B cell (primary cell): ENCODE measurements at regions of chr2 and their contacts with region 1.

Region 1: GRCh38 chr2:128321784-128322714 is 3.4 kb upstream of the HS6ST1 start:
- DNase-seq: peak; percentile 91
- ATAC-seq: peak; percentile 52
- H3K4me3 ChIP-seq: peak overlapping the region; percentile 31 to 67 (median 52)
- H3K4me3 Mint-ChIP-seq: peak overlapping the region; percentile 78
- H3K27ac ChIP-seq: no peak overlapping the region
- H3K27ac Mint-ChIP-seq: peak overlapping the region; percentile 71
- H3K4me1 ChIP-seq: peaks cover 15 to 21% of the 10 kb centered on the region in 2 donors
- H3K4me1 Mint-ChIP-seq: peaks cover 20% of the 10 kb centered on the region
- H3K27me3 ChIP-seq: peaks cover 0 to 10% (median 0%) of the 10 kb centered on the region in 4 experiments
- H3K27me3 Mint-ChIP-seq: no peaks in the 10 kb centered on the region
- CTCF ChIP-seq: peak; percentile 96

Region 2: GRCh38 chr2:128405981-128406613 is 84.0 kb after region 1 on chr2:
- CTCF ChIA-PET with region 1: no interaction called
- POLR2A ChIA-PET with region 1: no interaction called
- intact Hi-C with region 1: no loop called
- DNase-seq: no peak
- ATAC-seq: no peak
- H3K4me3 ChIP-seq: no peak overlapping the region
- H3K4me3 Mint-ChIP-seq: no peak overlapping the region
- H3K27ac ChIP-seq: no peak overlapping the region
- H3K27ac Mint-ChIP-seq: no peak overlapping the region
- H3K4me1 ChIP-seq: no peaks in the 10 kb centered on the region
- H3K4me1 Mint-ChIP-seq: no peaks in the 10 kb centered on the region
- H3K27me3 ChIP-seq: no peaks in the 10 kb centered on the region
- H3K27me3 Mint-ChIP-seq: peaks cover 10% of the 10 kb centered on the region
- CTCF ChIP-seq: no peak

Region 3: DNA sequence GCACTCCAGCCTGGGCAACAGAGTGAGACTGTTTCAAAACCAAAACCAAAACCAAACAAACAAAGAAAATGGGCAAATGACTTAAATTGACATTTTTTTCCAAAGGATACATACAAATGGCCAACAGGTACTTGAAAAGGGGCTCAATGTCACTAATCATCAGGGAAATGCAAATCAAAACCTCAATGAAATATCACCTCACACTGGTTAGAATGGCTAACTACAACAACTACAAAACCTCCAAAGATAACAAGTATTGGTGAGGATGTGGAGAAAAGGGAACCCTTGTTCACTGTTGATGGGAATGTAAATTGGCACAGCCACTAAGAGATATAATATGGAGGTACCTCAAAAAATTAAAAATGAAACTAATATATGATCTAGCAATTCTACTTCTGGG is 209.8 kb after region 1 on chr2:
- CTCF ChIA-PET with region 1: no interaction called
- POLR2A ChIA-PET with region 1: no interaction called
- intact Hi-C with region 1: loop called (anchors 5 kb)
- DNase-seq: peak; percentile 25
- ATAC-seq: no peak
- H3K4me3 ChIP-seq: no peak overlapping the region
- H3K4me3 Mint-ChIP-seq: no peak overlapping the region
- H3K27ac ChIP-seq: no peak overlapping the region
- H3K27ac Mint-ChIP-seq: no peak overlapping the region
- H3K4me1 ChIP-seq: no peaks in the 10 kb centered on the region
- H3K4me1 Mint-ChIP-seq: peaks cover 2% of the 10 kb centered on the region
- H3K27me3 ChIP-seq: no peaks in the 10 kb centered on the region
- H3K27me3 Mint-ChIP-seq: no peaks in the 10 kb centered on the region
- CTCF ChIP-seq: no peak

Region 4: GRCh38 chr2:128754246-128754724 is 432.2 kb after region 1 on chr2:
- CTCF ChIA-PET with region 1: interaction called, 5 read pairs
- POLR2A ChIA-PET with region 1: no interaction called
- intact Hi-C with region 1: loop called (anchors 5 kb)
- DNase-seq: peak; percentile 70
- ATAC-seq: peak; percentile 83
- H3K4me3 ChIP-seq: peak overlapping the region in 1 of 5 experiments; percentile 23
- H3K4me3 Mint-ChIP-seq: peak overlapping the region; percentile 67
- H3K27ac ChIP-seq: peak overlapping the region; percentile 46 to 59
- H3K27ac Mint-ChIP-seq: peak overlapping the region; percentile 80
- H3K4me1 ChIP-seq: peaks cover 46 to 64% of the 10 kb centered on the region in 2 donors
- H3K4me1 Mint-ChIP-seq: peaks cover 57% of the 10 kb centered on the region
- H3K27me3 ChIP-seq: no peaks in the 10 kb centered on the region
- H3K27me3 Mint-ChIP-seq: no peaks in the 10 kb centered on the region
- CTCF ChIP-seq: no peak

Region 5: DNA sequence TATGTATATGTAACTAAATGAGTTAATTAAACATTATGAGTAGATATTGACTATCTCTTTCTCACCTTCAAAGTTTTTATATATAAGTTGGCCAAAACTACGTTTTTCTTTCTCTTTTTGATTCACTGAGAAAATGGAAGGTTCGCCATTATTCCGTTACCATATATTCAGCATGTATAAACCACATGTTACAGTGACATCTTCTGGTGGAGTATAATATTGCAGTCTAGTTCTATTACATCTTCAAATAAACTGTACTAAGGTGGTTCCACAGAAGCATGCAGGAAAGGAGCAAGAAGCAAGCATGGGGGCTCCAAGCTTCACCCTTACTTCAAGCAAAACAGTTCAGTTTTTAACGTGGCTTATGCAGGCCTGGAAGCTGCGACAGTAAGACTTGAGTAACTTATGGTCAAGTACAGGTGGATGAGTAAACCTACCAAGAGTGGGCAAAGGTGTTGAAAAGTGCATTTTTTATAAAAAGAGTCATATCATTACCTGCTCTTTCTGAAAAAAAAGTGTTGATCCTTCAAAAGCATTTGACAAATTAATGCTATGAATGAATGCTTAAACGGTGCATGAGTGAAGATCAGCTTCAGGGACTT is 1527.6 kb after region 1 on chr2:
- CTCF ChIA-PET with region 1: no interaction called
- POLR2A ChIA-PET with region 1: no interaction called
- intact Hi-C with region 1: loop called (anchors 2 kb)
- DNase-seq: peak; percentile 81
- ATAC-seq: peak; percentile 75
- H3K4me3 ChIP-seq: no peak overlapping the region
- H3K4me3 Mint-ChIP-seq: no peak overlapping the region
- H3K27ac ChIP-seq: no peak overlapping the region
- H3K27ac Mint-ChIP-seq: no peak overlapping the region
- H3K4me1 ChIP-seq: no peaks in the 10 kb centered on the region
- H3K4me1 Mint-ChIP-seq: peaks cover 2% of the 10 kb centered on the region
- H3K27me3 ChIP-seq: no peaks in the 10 kb centered on the region
- H3K27me3 Mint-ChIP-seq: peaks cover 23% of the 10 kb centered on the region
- CTCF ChIP-seq: peak; percentile 90

Region 6: DNA sequence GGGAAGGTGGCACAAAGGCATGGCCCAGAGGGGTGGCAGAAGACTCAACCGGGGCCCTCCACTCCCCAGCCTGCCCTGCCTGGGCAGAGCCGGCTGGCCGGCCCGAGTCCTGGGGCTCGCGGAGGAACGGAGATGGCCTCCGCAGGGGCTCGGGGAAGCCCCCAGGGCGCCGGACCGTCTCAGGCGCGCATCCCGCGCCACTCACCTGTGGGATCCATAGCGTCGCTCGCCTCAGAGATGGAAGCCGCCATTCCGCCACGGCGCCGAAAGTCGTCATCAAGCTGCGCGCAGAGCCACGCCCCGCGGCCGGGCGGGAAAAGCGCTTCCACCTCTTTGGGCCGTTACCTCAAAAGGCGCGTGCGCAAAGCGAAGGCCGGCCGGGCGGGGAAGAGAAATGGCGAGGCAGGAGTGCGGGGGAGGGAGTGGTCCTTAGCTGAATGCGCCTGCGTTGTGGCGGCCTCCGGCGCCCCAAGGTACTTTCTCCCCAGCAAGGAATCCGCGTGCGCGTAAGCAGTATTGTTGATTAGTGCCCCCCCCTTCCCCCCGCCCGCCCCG is 1859.4 kb after region 1 on chr2 and contains the start of gene SMPD4:
- CTCF ChIA-PET with region 1: no interaction called
- POLR2A ChIA-PET with region 1: no interaction called
- intact Hi-C with region 1: loop called (anchors 10 kb)
- DNase-seq: peak; percentile 98
- ATAC-seq: peak; percentile 72
- H3K4me3 ChIP-seq: peak within 1 kb of the TSS; percentile 38 to 90 (median 80)
- H3K4me3 Mint-ChIP-seq: peak within 1 kb of the TSS; percentile 92
- H3K27ac ChIP-seq: peak within 1 kb of the TSS; percentile 85 to 91
- H3K27ac Mint-ChIP-seq: peak within 1 kb of the TSS; percentile 97
- H3K4me1 ChIP-seq: peaks cover 14 to 21% of the 10 kb centered on the region in 2 donors
- H3K4me1 Mint-ChIP-seq: peaks cover 24% of the 10 kb centered on the region
- H3K27me3 ChIP-seq: no peaks in the 10 kb centered on the region
- H3K27me3 Mint-ChIP-seq: no peaks in the 10 kb centered on the region
- CTCF ChIP-seq: no peak
- total RNA-seq, gene SMPD4: 63.8 and 67.5 TPM in 2 replicates